ENCODE measurements at regions of chr1 and their contacts with region 1.

Region 1: DNA sequence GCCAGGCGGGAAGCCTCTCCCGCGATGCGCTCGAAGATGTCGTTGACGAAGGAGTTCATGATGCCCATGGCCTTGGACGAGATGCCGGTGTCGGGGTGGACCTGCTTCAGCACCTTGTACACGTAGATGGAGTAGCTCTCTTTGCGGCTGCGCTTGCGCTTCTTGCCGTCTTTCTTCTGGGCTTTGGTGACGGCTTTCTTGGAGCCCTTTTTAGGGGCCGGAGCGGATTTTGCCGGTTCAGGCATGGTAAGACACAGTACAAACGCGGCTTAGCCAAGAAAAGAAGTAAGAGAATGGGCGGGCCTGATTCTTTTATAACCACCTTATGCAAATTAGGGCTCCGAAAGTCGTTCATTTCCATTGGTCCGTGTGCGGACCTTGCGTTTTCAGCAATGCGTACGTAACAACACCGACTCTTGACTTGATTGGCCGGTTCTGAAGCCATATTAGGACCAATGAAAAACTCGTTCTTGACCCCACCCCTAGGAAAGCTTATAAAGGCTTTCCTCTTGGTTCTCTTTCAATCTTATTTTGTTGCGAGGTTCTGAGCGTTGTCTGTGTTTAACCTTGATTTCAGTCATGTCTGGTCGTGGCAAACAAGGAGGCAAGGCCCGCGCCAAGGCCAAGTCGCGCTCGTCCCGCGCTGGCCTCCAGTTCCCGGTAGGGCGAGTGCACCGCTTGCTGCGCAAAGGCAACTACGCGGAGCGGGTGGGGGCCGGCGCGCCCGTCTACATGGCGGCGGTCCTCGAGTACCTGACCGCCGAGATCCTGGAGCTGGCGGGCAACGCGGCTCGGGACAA is 12.8 kb upstream of the BOLA1 start:
- DNase-seq: peak; percentile 93 to 97
- H3K4me3 ChIP-seq: peak overlapping the region; percentile 66
- H3K4me3 Mint-ChIP-seq: no peak overlapping the region
- H3K27ac Mint-ChIP-seq: no peak overlapping the region
- H3K4me1 ChIP-seq: peaks cover 13% of the 10 kb centered on the region
- H3K4me1 Mint-ChIP-seq: peaks cover 8% of the 10 kb centered on the region
- H3K27me3 ChIP-seq: no peaks in the 10 kb centered on the region
- H3K27me3 Mint-ChIP-seq: no peaks in the 10 kb centered on the region
- CTCF ChIP-seq: no peak

Region 2: DNA sequence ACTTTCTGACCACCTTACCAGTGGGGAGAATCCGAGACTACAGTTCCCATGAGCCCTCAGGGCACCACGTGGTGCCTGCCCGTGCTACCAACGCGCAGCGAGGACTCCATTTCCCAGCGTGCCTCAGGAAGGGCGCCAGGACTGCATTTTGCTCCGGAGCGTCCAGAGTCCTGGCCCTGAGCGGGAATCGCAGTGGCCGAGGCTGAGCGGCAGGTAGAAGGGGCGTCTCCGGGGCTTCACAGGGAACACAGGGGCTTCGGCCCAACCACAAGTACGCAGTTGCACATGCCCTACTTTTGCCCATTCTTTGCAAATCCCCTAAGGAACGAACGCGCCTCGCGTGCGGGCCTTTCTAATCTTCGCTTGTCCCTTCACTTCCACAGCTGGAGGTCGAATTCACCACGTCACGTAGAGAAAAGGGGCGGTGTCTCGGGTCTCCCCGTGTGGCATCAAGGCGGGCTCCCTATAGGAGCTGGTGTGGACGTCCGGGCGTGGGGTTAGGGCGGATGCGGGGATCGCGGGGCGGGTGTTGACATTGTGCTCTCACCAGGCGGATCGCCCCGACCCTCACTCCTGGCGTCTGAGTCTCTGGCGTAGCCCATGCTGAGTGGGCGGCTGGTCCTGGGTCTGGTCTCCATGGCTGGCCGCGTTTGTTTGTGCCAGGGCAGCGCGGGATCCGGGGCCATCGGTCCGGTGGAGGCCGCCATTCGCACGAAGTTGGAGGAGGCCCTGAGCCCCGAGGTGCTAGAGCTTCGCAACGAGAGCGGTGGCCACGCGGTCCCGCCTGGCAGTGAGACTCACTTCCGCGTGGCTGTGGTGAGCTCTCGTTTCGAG is 13.1 kb after region 1 on chr1 and contains the start of gene BOLA1:
- CTCF ChIA-PET with region 1: interaction called, 3 read pairs
- POLR2A ChIA-PET with region 1: interaction called, 30 read pairs
- intact Hi-C with region 1: no loop called
- DNase-seq: peak; percentile 93 to 95
- H3K4me3 ChIP-seq: peak within 1 kb of the TSS; percentile 76
- H3K4me3 Mint-ChIP-seq: peak within 1 kb of the TSS; percentile 89
- H3K27ac Mint-ChIP-seq: peak within 1 kb of the TSS; percentile 93
- H3K4me1 ChIP-seq: peaks cover 10% of the 10 kb centered on the region
- H3K4me1 Mint-ChIP-seq: peaks cover 30% of the 10 kb centered on the region
- H3K27me3 ChIP-seq: no peaks in the 10 kb centered on the region
- H3K27me3 Mint-ChIP-seq: no peaks in the 10 kb centered on the region
- CTCF ChIP-seq: peak in 1 of 2 experiments; percentile 0
- total RNA-seq, gene BOLA1: 22.7 and 22.9 TPM in 2 replicates

Region 3: GRCh38 chr1:149927503-149928387 is 41.1 kb after region 1 on chr1 and contains the start of gene SF3B4:
- CTCF ChIA-PET with region 1: interaction called, 4 read pairs
- POLR2A ChIA-PET with region 1: interaction called, 21 read pairs
- intact Hi-C with region 1: loop called (anchors 1 kb)
- DNase-seq: peak; percentile 94 to 95
- H3K4me3 ChIP-seq: peak within 1 kb of the TSS; percentile 99
- H3K4me3 Mint-ChIP-seq: peak within 1 kb of the TSS; percentile 91
- H3K27ac Mint-ChIP-seq: peak within 1 kb of the TSS; percentile 94
- H3K4me1 ChIP-seq: peaks cover 9% of the 10 kb centered on the region
- H3K4me1 Mint-ChIP-seq: peaks cover 11% of the 10 kb centered on the region
- H3K27me3 ChIP-seq: no peaks in the 10 kb centered on the region
- H3K27me3 Mint-ChIP-seq: no peaks in the 10 kb centered on the region
- CTCF ChIP-seq: no peak
- total RNA-seq, gene SF3B4: 103 and 104 TPM in 2 replicates

Region 4: DNA sequence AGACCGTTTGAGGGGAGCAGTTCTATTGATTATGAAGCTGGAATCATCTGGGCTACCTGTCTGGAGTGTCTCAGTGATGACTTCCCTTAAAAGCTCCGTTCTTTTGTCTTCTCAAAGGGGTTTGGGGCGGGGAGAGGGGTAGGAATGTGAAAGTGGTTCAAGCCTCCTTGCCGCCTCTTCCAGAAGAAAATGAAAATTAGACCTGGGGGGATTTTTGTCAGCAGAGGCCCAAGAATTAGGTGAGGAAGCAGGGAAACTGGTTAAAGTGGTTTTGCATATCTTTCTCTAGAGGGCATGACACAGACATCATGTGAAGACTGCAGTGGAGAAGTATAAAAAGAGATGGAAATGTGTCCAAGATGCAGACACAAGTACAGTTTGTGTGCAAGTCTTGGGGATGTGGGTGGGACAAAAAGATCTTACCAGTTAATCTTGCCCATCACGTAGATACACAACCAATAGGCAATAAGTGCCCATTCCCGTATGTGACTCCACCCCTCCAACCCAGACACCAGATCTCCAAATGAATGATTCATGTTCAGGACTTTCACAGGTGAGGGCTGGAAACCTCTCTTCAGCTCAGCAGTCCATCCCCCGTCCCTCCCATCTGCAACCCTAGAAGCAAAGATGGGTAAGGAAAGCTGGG is 50.6 kb after region 1 on chr1:
- CTCF ChIA-PET with region 1: interaction called, 6 read pairs
- POLR2A ChIA-PET with region 1: interaction called, 16 read pairs
- intact Hi-C with region 1: loop called (anchors 1 kb)
- DNase-seq: peak; percentile 37 to 58
- H3K4me3 ChIP-seq: peak overlapping the region; percentile 30
- H3K4me3 Mint-ChIP-seq: peak overlapping the region; percentile 83
- H3K27ac Mint-ChIP-seq: peak overlapping the region; percentile 9
- H3K4me1 ChIP-seq: peaks cover 37% of the 10 kb centered on the region
- H3K4me1 Mint-ChIP-seq: peaks cover 33% of the 10 kb centered on the region
- H3K27me3 ChIP-seq: no peaks in the 10 kb centered on the region
- H3K27me3 Mint-ChIP-seq: no peaks in the 10 kb centered on the region
- CTCF ChIP-seq: peak in 1 of 2 experiments; percentile 2

Region 5: GRCh38 chr1:149942207-149942606 is 55.6 kb after region 1 on chr1:
- CTCF ChIA-PET with region 1: interaction called, 6 read pairs
- POLR2A ChIA-PET with region 1: interaction called, 16 read pairs
- intact Hi-C with region 1: loop called (anchors 1 kb)
- DNase-seq: peak in 1 of 2 experiments; percentile 66
- H3K4me3 ChIP-seq: no peak overlapping the region
- H3K4me3 Mint-ChIP-seq: no peak overlapping the region
- H3K27ac Mint-ChIP-seq: no peak overlapping the region
- H3K4me1 ChIP-seq: peaks cover 22% of the 10 kb centered on the region
- H3K4me1 Mint-ChIP-seq: peaks cover 14% of the 10 kb centered on the region
- H3K27me3 ChIP-seq: no peaks in the 10 kb centered on the region
- H3K27me3 Mint-ChIP-seq: no peaks in the 10 kb centered on the region
- CTCF ChIP-seq: peak; percentile 50 to 66

Region 6: DNA sequence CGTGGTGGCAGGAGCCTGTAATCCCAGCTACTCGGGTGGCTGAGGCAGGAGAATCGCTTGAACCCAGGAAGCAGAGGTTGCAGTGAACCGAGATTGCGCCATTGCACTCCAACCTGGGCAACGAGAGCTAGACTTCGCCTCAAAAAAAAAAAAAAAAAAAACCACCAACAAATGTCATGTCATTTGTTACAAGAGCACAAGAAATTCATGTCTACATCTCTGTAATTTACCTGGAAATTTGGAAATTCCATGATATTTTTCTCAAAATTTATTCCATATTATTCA is 164.4 kb after region 1 on chr1:
- CTCF ChIA-PET with region 1: interaction called, 5 read pairs
- POLR2A ChIA-PET with region 1: interaction called, 3 read pairs
- intact Hi-C with region 1: loop called (anchors 1 kb)
- DNase-seq: no peak
- H3K4me3 ChIP-seq: no peak overlapping the region
- H3K4me3 Mint-ChIP-seq: no peak overlapping the region
- H3K27ac Mint-ChIP-seq: no peak overlapping the region
- H3K4me1 ChIP-seq: no peaks in the 10 kb centered on the region
- H3K4me1 Mint-ChIP-seq: no peaks in the 10 kb centered on the region
- H3K27me3 ChIP-seq: no peaks in the 10 kb centered on the region
- H3K27me3 Mint-ChIP-seq: no peaks in the 10 kb centered on the region
- CTCF ChIP-seq: no peak

Region 7: GRCh38 chr1:150186789-150187559 is 300.4 kb after region 1 on chr1:
- CTCF ChIA-PET with region 1: interaction called, 9 read pairs
- POLR2A ChIA-PET with region 1: interaction called, 9 read pairs
- intact Hi-C with region 1: loop called (anchors 1 kb)
- DNase-seq: peak in 1 of 2 experiments; percentile 64
- H3K4me3 ChIP-seq: no peak overlapping the region
- H3K4me3 Mint-ChIP-seq: no peak overlapping the region
- H3K27ac Mint-ChIP-seq: no peak overlapping the region
- H3K4me1 ChIP-seq: peaks cover 6% of the 10 kb centered on the region
- H3K4me1 Mint-ChIP-seq: peaks cover 4% of the 10 kb centered on the region
- H3K27me3 ChIP-seq: no peaks in the 10 kb centered on the region
- H3K27me3 Mint-ChIP-seq: no peaks in the 10 kb centered on the region
- CTCF ChIP-seq: peak; percentile 34 to 53

Measured in Caco-2 (cell line).